Spleen (tissue), 13 donors: ENCODE measurements at regions of chr20 and their contacts with region 1.

Region 1: GRCh38 chr20:36613974-36614373 is 8.4 kb downstream of the RAB5IF start:
- DNase-seq: no peak
- H3K4me3 ChIP-seq: no peak overlapping the region
- H3K27ac ChIP-seq: peak overlapping the region in 1 of 8 donors; percentile 11
- H3K4me1 ChIP-seq: peaks cover 0 to 18% (median 2%) of the 10 kb centered on the region in 6 donors
- H3K27me3 ChIP-seq: no peaks in the 10 kb centered on the region
- CTCF ChIP-seq: no peak
- POLR2A ChIP-seq: no peak

Region 2: DNA sequence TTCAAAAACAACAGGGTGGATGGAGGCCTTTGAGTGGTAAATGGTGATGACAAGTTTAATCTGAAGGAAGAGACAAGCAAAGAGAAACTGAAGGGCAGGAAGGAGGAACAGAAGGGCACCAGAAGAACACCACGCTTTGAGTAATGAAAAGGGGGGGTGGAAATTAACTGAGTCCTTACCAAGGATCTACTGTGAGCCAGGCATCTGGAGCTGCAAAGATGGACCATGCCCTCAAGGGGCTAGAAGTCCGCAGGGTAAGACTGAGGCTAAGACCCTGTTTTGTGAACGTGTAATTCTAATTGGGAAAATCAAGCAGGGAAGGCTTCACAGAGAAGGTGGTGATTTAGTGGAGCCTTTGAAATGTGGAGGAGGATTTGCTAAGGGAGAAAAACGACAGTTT is 130.3 kb after region 1 on chr20:
- intact Hi-C with region 1: no loop called
- DNase-seq: no peak
- H3K4me3 ChIP-seq: no peak overlapping the region
- H3K27ac ChIP-seq: no peak overlapping the region
- H3K4me1 ChIP-seq: peaks cover 8 to 26% (median 19%) of the 10 kb centered on the region in 6 donors
- H3K27me3 ChIP-seq: no peaks in the 10 kb centered on the region
- CTCF ChIP-seq: no peak
- POLR2A ChIP-seq: no peak

Region 3: DNA sequence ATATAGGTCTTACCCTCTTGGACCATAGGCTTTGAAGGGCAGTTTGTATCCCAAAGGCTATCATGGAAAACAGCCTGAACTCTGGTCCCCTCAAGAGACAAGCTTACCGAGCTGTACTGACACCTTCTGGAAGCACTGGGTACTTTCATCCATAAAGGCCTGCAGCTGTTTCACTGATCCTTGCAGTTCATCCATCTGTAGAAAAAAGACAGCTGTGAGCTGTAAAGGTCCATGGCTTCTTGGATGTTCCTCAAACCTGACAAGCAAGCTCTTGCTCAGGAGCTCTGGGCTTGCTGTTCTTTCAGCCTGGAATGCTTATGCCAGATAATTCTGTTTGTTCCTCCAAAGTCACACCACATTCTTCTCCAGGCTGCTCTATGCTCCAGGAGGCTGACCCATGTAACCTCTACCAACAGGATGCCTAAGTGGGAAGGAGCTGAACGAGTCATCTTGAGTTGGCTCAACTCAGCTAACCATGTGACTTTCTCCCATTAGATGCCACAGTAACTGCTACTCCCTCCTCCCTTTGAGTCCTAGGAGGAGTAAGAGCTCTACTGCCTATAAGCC is 140.8 kb after region 1 on chr20:
- intact Hi-C with region 1: loop called (anchors 10 kb)
- DNase-seq: no peak
- H3K4me3 ChIP-seq: no peak overlapping the region
- H3K27ac ChIP-seq: peak overlapping the region in 4 of 8 donors; percentile 4 to 90 (median 73)
- H3K4me1 ChIP-seq: peaks cover 7 to 47% (median 37%) of the 10 kb centered on the region in 6 donors
- H3K27me3 ChIP-seq: no peaks in the 10 kb centered on the region
- CTCF ChIP-seq: peak; percentile 51 to 87 (median 75)
- POLR2A ChIP-seq: no peak